ENCODE measurements at regions of chr7 and their contacts with region 1.

Region 1: DNA sequence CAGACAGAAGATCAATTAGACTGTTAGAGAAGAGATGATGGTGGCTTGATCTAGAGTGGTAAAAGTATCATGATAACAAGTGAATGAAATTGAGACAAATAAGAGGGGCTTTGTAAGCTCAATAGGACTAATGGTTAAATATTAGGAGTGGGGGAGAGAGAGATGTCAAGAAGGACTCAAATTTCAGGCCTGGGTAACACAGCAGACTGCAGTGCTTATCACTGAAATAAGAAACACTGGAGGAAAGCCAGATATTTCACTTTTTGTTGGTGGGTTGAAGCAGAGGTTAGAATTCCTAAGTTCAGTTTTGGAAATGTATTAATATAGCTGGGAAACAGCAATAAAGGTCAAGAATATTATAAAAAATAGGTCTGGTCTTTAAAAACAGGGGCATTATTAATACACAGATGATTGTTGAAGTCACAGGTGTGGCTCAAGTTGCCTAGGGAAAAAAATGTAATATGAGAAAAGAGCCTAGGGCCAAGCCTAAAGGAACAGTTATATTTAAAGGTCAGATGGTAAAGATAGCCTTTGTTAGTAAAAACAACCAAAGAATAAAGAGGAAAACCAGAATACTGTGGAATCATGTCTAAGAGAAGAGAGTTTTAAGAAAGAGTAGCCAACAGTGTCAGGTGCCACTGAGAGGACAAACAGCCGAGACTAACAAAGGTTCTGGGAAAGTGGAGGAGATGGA is 74.4 kb downstream of the ORC5 start:
- DNase-seq: no peak
- H3K4me3 ChIP-seq: no peak overlapping the region
- H3K27ac ChIP-seq: no peak overlapping the region
- H3K4me1 ChIP-seq: no peaks in the 10 kb centered on the region
- H3K27me3 ChIP-seq: no peaks in the 10 kb centered on the region
- CTCF ChIP-seq: no peak

Region 2: GRCh38 chr7:104061652-104062051 is 71.7 kb before region 1 on chr7:
- intact Hi-C with region 1: loop called (anchors 2 kb)
- DNase-seq: no peak
- H3K4me3 ChIP-seq: no peak overlapping the region
- H3K27ac ChIP-seq: no peak overlapping the region
- H3K4me1 ChIP-seq: no peaks in the 10 kb centered on the region
- H3K27me3 ChIP-seq: no peaks in the 10 kb centered on the region
- CTCF ChIP-seq: no peak